Mammary epithelial cell (primary cell): ENCODE measurements at regions of chr12 and their contacts with region 1.

Region 1: DNA sequence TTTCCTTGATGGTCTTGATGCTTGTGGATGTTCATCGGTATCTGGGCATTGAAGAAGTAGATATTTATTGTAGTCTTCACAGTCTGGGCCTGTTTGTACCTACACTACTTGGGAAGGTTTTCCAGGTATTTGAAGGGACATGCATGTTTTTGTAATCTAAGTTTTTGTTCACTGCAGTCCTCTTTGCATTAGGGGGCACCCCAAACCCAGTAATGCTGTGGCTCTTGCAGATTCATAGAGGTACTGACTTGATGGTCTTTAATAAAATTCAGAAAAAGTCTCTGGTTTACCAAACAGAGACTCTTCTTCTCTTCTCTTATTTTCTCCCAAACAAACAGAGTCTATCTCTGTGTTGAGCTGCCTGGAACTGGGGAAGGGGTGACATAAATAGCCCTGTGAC is 150.9 kb upstream of the SLC16A7 start:
- DNase-seq: peak; percentile 8
- H3K4me3 ChIP-seq: no peak overlapping the region
- H3K27ac ChIP-seq: no peak overlapping the region
- H3K4me1 ChIP-seq: no peaks in the 10 kb centered on the region
- H3K27me3 ChIP-seq: no peaks in the 10 kb centered on the region
- CTCF ChIP-seq: peak; percentile 6 to 48

Region 2: DNA sequence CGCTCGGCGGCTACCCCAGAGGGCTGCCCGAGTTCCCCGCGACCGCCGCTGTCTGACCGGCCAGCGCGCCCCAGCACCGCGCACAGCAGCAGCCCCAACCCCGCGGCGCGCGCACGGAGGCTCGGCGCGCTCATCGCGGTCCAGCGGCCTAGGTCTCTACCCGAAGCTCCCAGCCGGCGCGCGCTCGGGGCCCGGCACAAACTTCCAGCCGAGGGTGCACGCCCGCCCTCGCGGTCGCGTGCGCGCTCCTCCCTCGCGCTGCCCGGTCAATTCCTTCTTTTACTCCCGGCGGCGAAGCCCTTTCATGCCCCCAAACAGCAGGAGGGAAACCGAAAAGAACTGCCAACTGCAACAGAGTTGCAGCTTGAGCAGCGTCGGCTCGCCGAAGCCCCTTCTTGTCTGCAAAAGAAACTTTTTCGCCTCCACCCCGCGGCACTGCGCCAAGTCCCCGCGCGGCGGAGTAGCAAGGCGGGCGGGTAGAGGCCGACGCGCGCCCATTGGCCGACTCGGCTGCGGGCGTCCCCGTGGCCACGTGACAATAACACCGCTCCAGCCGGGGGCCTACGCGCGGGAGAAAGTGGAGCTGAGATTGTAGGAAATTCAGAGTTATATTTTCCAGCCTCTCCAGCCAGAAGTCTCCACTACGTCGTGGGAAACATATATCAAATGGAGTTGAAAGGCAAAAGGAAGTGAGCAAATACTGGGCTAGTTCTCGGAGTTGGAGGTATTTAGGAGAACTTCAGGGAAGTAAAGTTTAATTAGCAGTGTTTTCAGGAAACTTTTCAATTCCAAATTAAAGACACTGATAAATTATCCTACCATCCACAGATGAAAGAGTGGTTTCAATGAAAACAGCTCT is 524.6 kb before region 1 on chr12 and contains the start of gene LRIG3:
- CTCF ChIA-PET with region 1: no interaction called
- dilution Hi-C with region 1: no loop called
- in situ Hi-C with region 1: no loop called
- intact Hi-C with region 1: no loop called
- DNase-seq: peak; percentile 88
- H3K4me3 ChIP-seq: peak within 1 kb of the TSS; percentile 69 to 88 (median 78)
- H3K27ac ChIP-seq: peak within 1 kb of the TSS; percentile 92
- H3K4me1 ChIP-seq: peaks cover 9% of the 10 kb centered on the region
- H3K27me3 ChIP-seq: no peaks in the 10 kb centered on the region
- CTCF ChIP-seq: peak in 1 of 2 donors; percentile 28
- total RNA-seq, gene LRIG3: 45.5 to 115 TPM

Region 3: GRCh38 chr12:59345406-59345805 is 99.5 kb before region 1 on chr12:
- CTCF ChIA-PET with region 1: no interaction called
- dilution Hi-C with region 1: loop called (anchors 5 kb)
- in situ Hi-C with region 1: no loop called
- intact Hi-C with region 1: no loop called
- DNase-seq: no peak
- H3K4me3 ChIP-seq: no peak overlapping the region
- H3K27ac ChIP-seq: no peak overlapping the region
- H3K4me1 ChIP-seq: no peaks in the 10 kb centered on the region
- H3K27me3 ChIP-seq: no peaks in the 10 kb centered on the region
- CTCF ChIP-seq: no peak

Region 4: DNA sequence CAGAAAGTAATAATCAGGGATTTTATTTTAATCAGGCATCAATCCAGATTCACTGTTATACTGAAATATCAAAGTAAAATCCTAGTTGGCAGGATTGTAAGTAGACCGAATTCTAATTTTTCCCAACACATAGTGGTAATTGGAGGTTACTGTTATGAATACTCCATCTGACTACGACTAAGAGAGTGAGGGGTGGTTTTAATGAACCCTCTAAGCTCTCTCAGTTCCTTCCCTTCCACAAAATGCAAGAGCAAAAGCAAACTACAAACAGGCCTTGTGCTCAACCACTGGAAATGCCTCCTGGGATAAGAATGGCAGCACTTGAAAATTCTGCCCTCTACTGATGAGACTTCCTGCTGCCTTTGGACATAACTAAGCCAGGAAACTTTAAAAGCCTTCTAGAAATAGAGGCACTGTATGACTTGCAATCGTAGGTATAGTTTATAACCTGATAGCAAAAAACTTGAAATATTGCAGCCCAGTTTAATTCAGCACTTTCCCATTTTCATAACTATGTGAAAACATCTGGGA is 335.7 kb after region 1 on chr12:
- CTCF ChIA-PET with region 1: no interaction called
- dilution Hi-C with region 1: no loop called
- in situ Hi-C with region 1: no loop called
- intact Hi-C with region 1: loop called (anchors 5 kb)
- DNase-seq: peak; percentile 33
- H3K4me3 ChIP-seq: no peak overlapping the region
- H3K27ac ChIP-seq: no peak overlapping the region
- H3K4me1 ChIP-seq: no peaks in the 10 kb centered on the region
- H3K27me3 ChIP-seq: no peaks in the 10 kb centered on the region
- CTCF ChIP-seq: peak; percentile 46 to 73

Region 5: GRCh38 chr12:59808317-59808910 is 363.5 kb after region 1 on chr12:
- CTCF ChIA-PET with region 1: no interaction called
- dilution Hi-C with region 1: no loop called
- in situ Hi-C with region 1: no loop called
- intact Hi-C with region 1: loop called (anchors 5 kb)
- DNase-seq: peak; percentile 22
- H3K4me3 ChIP-seq: no peak overlapping the region
- H3K27ac ChIP-seq: no peak overlapping the region
- H3K4me1 ChIP-seq: peaks cover 5% of the 10 kb centered on the region
- H3K27me3 ChIP-seq: no peaks in the 10 kb centered on the region
- CTCF ChIP-seq: peak; percentile 76 to 80

Region 6: DNA sequence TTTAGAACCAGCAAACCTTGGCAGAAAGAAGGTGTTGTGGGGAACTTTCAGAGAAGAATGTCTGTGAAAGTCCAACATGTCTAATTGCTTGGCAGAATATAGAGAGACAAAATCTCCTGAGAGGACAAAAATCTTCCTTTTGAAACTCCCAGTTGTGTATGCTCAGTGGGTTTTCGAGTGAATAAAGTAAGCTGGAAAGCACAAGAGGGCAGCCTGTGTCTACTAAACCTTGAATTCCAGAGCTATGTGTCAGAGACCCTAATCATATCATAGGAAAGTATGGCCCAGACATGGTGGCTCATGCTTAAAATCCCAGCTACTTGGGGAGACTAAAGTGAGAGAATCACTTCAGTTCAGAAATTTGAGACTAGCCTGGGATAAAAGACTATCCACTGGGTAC is 812.1 kb after region 1 on chr12:
- CTCF ChIA-PET with region 1: no interaction called
- dilution Hi-C with region 1: no loop called
- in situ Hi-C with region 1: no loop called
- intact Hi-C with region 1: loop called (anchors 10 kb)
- DNase-seq: peak; percentile 43
- H3K4me3 ChIP-seq: no peak overlapping the region
- H3K27ac ChIP-seq: no peak overlapping the region
- H3K4me1 ChIP-seq: no peaks in the 10 kb centered on the region
- H3K27me3 ChIP-seq: no peaks in the 10 kb centered on the region
- CTCF ChIP-seq: peak; percentile 21 to 30